Esophagus muscularis mucosa (tissue), 4 donors: ENCODE measurements at regions of chr12 and their contacts with region 1.

Region 1: DNA sequence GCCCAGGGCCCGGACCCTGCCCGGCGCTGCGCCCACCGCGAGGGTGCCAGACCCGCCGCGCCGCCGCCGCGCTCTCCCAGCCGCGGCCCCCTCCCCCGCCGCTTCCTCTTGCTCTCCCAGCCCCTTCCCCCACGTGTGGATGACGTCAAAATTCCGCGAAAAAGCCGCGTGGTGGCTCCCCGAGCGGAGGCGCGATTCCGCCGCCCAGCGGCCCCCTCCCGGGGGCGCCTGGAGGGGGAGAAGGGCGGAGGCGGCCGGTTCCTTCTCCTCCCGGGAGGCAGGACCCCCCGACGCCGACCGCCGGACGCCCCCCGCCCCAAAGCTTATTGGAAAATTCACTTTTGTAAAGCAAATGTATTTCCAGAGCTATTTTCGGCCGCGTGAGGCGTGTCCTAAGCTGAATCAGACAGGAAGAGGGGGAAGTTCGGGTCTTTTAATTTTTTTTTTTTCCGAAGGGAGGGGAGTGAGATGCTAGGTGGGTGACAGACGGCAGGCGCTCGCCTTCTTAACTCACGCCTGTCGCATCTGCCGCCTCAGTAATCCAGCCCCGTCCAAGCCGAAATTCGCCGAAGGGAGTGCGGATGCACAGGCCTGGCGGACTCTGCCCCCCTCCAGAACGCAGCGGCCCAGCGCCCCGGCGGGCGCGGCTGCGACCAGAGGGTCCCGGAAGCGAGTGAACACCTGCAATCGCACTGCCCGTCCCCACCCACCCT is 4.1 kb upstream of the CCND2 start:
- DNase-seq: no peak
- H3K4me3 ChIP-seq: peak overlapping the region; percentile 71 to 98 (median 76)
- H3K27ac ChIP-seq: peak overlapping the region; percentile 93 to 98 (median 97)
- H3K4me1 ChIP-seq: peaks cover 33 to 45% (median 41%) of the 10 kb centered on the region in 4 donors
- H3K27me3 ChIP-seq: peaks cover 0 to 5% (median 2%) of the 10 kb centered on the region in 4 donors
- CTCF ChIP-seq: peak; percentile 14 to 44 (median 23)
- EP300 ChIP-seq: no peak
- POLR2A ChIP-seq: peak; percentile 63

Region 2: DNA sequence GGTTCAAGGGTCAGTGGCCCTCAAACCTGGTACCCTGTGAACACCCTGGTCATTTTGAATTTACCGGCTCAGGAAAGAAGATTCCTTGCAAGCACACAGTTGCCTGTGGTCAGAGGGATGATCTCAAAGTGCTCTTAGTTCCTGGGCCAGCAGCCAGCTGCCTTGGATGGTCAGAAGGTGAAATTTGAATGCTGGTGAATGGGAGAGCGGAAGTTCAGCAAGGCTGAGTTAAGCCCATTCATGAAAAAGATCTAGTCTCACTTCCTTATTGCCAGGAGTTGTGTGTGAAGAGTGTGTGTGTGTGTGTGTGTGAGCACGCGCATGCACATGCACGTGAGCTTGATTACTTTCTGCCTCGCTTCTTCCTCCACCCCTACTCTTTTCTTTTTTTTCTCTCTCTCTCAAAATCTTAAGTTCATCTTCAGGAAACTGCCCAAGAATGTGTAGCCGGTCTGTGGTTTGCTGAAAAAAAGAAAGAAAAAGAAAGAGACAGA is 151.4 kb before region 1 on chr12:
- intact Hi-C with region 1: loop called (anchors 5 kb)
- DNase-seq: peak; percentile 90
- H3K4me3 ChIP-seq: no peak overlapping the region
- H3K27ac ChIP-seq: no peak overlapping the region
- H3K4me1 ChIP-seq: peaks cover 23 to 31% (median 26%) of the 10 kb centered on the region in 4 donors
- H3K27me3 ChIP-seq: peaks cover 0 to 38% (median 0%) of the 10 kb centered on the region in 4 donors
- CTCF ChIP-seq: no peak
- EP300 ChIP-seq: no peak
- POLR2A ChIP-seq: no peak